T-cell (primary cell): ENCODE measurements at regions of chr4 and their contacts with region 1.

Region 1: DNA sequence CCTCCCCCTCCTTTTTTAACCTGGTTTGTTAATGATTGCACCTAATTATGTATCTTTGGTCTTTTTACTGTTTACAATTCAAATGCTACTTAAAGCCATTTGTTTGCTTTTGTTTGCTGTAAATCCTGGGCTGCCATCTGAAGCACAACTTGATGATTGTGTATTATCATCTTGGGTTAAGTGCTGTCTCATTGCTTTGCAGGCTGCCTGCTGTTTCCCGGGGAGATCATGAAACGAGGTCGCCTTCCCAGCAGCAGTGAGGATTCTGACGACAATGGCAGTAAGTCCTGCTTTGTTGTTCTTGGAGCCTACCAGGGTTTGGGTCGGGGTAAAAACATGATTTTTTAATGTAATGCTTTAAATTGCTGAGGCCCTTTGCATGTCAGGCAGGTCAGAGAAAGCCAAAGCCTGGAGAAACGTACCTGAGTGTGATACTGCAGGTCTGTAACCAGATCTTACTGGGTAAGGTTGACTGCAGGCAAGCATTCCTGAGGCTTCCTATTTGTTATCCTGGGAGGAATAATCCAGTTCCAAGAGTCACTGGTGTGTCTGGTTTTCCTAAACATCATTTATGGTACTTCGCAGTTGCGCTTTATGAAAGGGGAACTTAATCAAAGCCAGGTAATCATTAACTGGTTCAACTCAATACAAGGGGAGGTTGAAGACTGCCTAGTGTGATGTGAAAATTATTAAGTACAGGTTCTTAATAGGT is 22.2 kb downstream of the JADE1 start:
- DNase-seq: no peak
- ATAC-seq: no peak
- H3K4me3 ChIP-seq: no peak overlapping the region
- H3K4me3 Mint-ChIP-seq: no peak overlapping the region
- H3K27ac ChIP-seq: no peak overlapping the region
- H3K27ac Mint-ChIP-seq: peak overlapping the region in 1 of 2 donors; percentile 60
- H3K4me1 ChIP-seq: peaks cover 0 to 11% of the 10 kb centered on the region in 2 experiments
- H3K4me1 Mint-ChIP-seq: peaks cover 75 to 83% (median 82%) of the 10 kb centered on the region in 3 donors
- H3K27me3 ChIP-seq: no peaks in the 10 kb centered on the region
- H3K27me3 Mint-ChIP-seq: no peaks in the 10 kb centered on the region

Region 2: DNA sequence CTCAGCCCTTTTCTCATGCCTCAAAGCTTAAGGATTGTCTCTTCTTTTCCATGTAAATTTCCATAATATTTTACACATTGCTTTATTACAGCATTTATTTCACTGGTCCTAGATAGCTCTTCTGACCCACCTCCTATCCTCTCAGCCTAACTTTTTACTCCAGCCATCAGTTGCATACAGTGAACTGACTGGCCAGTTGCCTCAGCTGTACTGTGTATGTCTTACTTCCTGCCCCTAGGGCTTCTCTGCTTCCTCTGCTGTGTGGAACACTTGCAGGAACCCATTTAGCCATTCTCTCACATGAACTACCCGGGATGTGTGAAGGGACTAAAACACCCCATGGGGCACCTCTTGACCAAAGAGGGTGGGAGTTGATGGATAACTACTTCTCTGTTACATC is 282.2 kb after region 1 on chr4:
- CTCF ChIA-PET with region 1: no interaction called
- POLR2A ChIA-PET with region 1: interaction called in 1 of 2 experiments, 10 read pairs
- DNase-seq: no peak
- ATAC-seq: no peak
- H3K4me3 ChIP-seq: no peak overlapping the region
- H3K4me3 Mint-ChIP-seq: no peak overlapping the region
- H3K27ac ChIP-seq: no peak overlapping the region
- H3K27ac Mint-ChIP-seq: no peak overlapping the region
- H3K4me1 ChIP-seq: no peaks in the 10 kb centered on the region
- H3K4me1 Mint-ChIP-seq: no peaks in the 10 kb centered on the region
- H3K27me3 ChIP-seq: no peaks in the 10 kb centered on the region
- H3K27me3 Mint-ChIP-seq: no peaks in the 10 kb centered on the region